ENCODE measurements at regions of chrX and their contacts with region 1.

Region 1: GRCh38 chrX:133335027-133335426 is 80.3 kb downstream of the GPC4 start:
- DNase-seq: peak; percentile 39

Region 2: DNA sequence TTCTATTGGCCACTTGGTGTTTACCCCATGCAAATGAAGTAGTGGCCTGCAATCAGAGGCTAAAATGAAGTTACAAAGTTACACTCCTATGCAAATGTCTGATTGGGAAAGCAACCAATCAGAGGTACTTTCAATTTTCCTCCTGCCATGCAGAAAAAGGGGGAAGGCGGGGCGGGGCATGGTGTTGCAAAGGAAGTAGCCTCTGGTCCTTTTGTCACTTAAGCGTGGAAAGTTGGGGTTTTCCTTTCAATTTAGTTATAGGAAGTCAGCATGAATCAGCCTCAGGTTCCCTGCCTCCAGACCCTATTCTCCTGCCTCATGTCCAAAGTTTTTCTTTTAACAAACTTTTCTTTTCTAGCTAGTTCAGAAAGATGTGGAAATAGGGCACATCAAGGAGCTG is 11.0 kb after region 1 on chrX:
- CTCF ChIA-PET with region 1: interaction called, 10 read pairs
- POLR2A ChIA-PET with region 1: no interaction called
- DNase-seq: no peak

Region 3: GRCh38 chrX:133670383-133670782 is 335.4 kb after region 1 on chrX:
- CTCF ChIA-PET with region 1: interaction called, 10 read pairs
- POLR2A ChIA-PET with region 1: no interaction called
- DNase-seq: peak; percentile 64

Measured in HEK293T (cell line).